HCT116 (cell line): ENCODE measurements at regions of chr5 and their contacts with region 1.

Region 1: GRCh38 chr5:55172051-55172899 is 702 bp downstream of the CDC20B start:
- DNase-seq: peak; percentile 85
- ATAC-seq: peak; percentile 42
- H3K4me3 ChIP-seq: peak overlapping the region; percentile 33 to 49
- H3K27ac ChIP-seq: no peak overlapping the region
- H3K4me1 ChIP-seq: peaks cover 14 to 37% of the 10 kb centered on the region in 2 experiments; a peak in 3 of 4 replicates
- H3K27me3 ChIP-seq: no peaks in the 10 kb centered on the region
- CTCF ChIP-seq: peak; percentile 68 to 87 (median 78)
- POLR2A ChIP-seq: no peak
- RAD21 ChIP-seq: peak; percentile 94

Region 2: DNA sequence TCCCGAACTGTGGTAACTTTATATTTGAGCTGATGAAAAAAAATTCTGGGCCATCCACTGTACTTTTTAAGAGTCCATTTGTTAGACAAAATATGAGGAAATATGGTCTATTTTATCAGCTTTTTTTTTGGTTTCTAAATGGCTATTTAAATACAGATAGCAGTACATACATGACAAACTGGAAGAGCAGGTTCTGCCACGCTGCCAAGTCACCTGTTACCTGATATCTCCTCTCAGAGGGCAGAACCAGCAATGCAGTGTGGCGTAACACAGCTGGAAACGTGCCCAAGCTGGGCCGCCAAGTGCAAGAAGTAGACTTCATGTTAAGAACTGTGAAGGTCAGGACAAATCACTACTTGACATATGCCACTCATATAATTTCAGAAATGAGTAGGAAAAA is 46.7 kb after region 1 on chr5:
- CTCF ChIA-PET with region 1: interaction called, 3 read pairs
- POLR2A ChIA-PET with region 1: no interaction called
- RAD21 ChIA-PET with region 1: interaction called in 1 of 2 experiments, 3 read pairs
- intact Hi-C with region 1: loop called (anchors 5 kb)
- DNase-seq: peak; percentile 84
- ATAC-seq: peak; percentile 86
- H3K4me3 ChIP-seq: no peak overlapping the region
- H3K27ac ChIP-seq: no peak overlapping the region; the same call in 1 of the 2 replicates
- H3K4me1 ChIP-seq: peaks cover 15 to 22% of the 10 kb centered on the region in 2 experiments
- H3K27me3 ChIP-seq: no peaks in the 10 kb centered on the region
- CTCF ChIP-seq: no peak
- POLR2A ChIP-seq: no peak
- RAD21 ChIP-seq: peak; percentile 30; the same call in 1 of the 2 replicates

Region 3: DNA sequence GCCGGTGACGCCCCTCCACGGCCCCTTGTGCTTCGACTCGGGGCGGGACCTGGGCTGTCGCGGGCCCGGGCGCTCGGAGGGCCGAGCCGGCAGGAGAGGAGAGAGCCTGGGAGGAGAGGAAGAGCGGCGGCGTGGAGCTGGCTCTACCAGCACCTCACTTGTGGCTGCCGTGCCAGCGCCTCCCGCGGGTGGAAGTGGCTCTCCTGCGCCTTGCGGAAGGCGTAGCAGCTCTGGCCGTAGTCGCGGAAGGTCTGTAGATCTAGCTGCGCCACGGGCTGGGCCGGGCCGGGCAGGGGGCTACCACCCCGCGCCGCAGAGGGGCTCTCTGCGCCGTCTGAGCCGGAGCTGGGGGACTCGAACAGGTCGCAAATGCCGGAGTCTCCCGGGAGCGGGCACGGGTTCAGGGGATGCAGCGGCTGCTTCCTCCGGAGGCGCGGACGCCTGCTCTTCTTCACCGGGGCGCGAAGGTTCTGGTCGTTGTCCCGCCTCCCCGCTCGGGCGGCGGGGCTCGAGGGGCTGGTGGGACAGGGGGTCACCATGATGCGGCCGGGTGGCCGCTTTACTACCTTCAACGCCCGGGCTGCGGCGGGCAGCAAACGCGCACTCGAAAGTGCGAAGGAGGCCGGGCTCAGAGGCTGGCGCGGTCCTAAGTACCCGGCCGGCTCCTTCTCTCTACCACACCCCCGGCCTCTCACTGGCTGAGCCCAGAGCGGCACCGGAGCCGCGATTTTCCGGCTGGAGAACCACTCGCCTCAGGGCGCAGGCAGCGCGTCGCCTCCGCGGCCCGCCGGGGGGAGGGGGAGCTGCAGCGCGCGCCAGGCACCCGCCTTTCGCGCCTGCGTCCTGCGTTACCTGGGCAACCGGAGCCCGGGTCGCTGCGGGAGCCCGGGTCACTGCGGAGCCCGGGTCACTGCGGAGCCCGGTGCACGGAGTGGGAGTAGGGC is 61.0 kb after region 1 on chr5 and contains the start of gene CCNO:
- CTCF ChIA-PET with region 1: interaction called, 14 read pairs
- POLR2A ChIA-PET with region 1: interaction called, 4 read pairs
- RAD21 ChIA-PET with region 1: no interaction called
- intact Hi-C with region 1: no loop called
- DNase-seq: peak; percentile 70
- ATAC-seq: peak; percentile 88
- H3K4me3 ChIP-seq: peak within 1 kb of the TSS; percentile 64 to 94
- H3K27ac ChIP-seq: peak within 1 kb of the TSS; percentile 88
- H3K4me1 ChIP-seq: peaks cover 10 to 24% of the 10 kb centered on the region in 2 experiments; a peak in 3 of 4 replicates
- H3K27me3 ChIP-seq: no peaks in the 10 kb centered on the region
- CTCF ChIP-seq: no peak; a peak in 1 of 6 replicates
- POLR2A ChIP-seq: peak; percentile 17
- RAD21 ChIP-seq: no peak
- total RNA-seq, gene CCNO: 12.1 TPM

Region 4: DNA sequence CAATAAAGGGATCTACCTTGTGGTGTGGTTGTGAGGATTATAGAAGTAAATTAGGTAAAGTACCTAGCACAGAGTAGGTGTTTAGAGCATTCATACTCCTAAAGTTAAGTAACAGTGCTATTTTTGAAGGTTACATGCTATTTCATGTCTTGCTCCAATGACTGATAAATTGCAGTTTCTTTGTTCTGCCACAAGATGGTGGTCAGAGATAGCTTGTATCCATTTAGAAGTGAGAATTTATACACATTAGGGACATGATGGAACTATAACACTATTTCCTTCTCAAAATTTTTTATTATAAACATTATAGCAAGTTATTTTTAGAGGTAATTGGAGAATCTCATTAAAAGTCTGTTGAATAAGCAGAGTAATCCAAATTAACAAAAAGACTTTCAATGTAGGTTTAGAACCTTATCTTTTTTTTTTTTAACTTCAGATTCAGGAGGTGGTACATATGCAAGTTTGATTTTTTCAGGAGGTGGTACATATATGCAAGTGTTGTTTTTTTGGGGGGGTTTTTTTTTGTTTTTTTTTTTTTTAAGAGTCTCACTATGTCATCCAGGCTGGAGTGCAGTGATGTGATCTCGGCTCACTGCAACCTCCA is 152.6 kb after region 1 on chr5:
- CTCF ChIA-PET with region 1: no interaction called
- POLR2A ChIA-PET with region 1: no interaction called
- RAD21 ChIA-PET with region 1: no interaction called
- intact Hi-C with region 1: loop called (anchors 5 kb)
- DNase-seq: peak; percentile 32
- ATAC-seq: peak; percentile 72
- H3K4me3 ChIP-seq: no peak overlapping the region
- H3K27ac ChIP-seq: no peak overlapping the region
- H3K4me1 ChIP-seq: no peaks in the 10 kb centered on the region
- H3K27me3 ChIP-seq: no peaks in the 10 kb centered on the region
- CTCF ChIP-seq: peak; percentile 42 to 70 (median 48); a peak in 5 of 6 replicates
- POLR2A ChIP-seq: no peak
- RAD21 ChIP-seq: peak; percentile 69

Region 5: DNA sequence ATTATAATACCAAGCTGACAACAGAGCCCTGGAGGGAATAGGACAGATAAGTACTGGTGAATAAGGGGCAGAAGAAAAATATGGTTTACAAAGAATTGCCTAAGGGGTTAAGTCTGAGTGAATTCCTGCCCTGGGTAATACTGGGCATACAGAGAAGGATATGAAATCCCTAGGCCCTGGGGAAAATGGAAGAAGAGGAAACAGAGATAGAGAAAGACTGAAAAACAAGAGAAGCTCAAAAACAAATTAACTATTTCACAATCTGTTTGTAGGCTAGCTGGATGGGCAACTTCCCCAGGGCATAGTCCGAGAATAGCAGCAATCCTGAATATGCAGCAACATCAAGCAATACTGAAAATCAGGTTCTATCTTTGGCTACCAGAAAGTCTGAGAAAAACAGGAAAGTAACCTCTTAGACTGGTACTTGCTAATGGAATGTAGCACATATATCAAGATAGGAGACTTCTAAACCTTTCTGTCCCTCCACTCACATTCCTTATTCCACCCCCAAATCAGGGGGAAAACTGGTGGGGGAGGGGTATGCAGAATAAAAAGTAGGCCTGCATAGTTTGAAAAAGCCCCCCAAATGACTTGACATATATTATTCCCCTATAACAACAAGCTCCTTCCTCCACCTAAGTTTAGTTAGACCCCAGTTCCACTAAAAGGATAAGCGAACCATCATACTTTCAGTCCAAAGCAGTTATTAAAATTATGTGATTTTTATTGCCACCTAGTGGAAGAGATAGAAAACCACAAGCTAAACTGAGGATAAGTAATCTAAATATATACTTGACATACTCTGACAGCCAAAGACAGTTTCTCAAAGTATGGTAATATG is 519.2 kb after region 1 on chr5:
- CTCF ChIA-PET with region 1: interaction called, 16 read pairs
- POLR2A ChIA-PET with region 1: no interaction called
- RAD21 ChIA-PET with region 1: no interaction called
- intact Hi-C with region 1: loop called (anchors 1 kb)
- DNase-seq: peak; percentile 33
- ATAC-seq: peak; percentile 63; the same call in 1 of the 2 replicates
- H3K4me3 ChIP-seq: no peak overlapping the region
- H3K27ac ChIP-seq: no peak overlapping the region
- H3K4me1 ChIP-seq: no peaks in the 10 kb centered on the region
- H3K27me3 ChIP-seq: no peaks in the 10 kb centered on the region
- CTCF ChIP-seq: peak; percentile 46 to 76 (median 68); a peak in 5 of 6 replicates
- POLR2A ChIP-seq: no peak
- RAD21 ChIP-seq: peak; percentile 82

Region 6: DNA sequence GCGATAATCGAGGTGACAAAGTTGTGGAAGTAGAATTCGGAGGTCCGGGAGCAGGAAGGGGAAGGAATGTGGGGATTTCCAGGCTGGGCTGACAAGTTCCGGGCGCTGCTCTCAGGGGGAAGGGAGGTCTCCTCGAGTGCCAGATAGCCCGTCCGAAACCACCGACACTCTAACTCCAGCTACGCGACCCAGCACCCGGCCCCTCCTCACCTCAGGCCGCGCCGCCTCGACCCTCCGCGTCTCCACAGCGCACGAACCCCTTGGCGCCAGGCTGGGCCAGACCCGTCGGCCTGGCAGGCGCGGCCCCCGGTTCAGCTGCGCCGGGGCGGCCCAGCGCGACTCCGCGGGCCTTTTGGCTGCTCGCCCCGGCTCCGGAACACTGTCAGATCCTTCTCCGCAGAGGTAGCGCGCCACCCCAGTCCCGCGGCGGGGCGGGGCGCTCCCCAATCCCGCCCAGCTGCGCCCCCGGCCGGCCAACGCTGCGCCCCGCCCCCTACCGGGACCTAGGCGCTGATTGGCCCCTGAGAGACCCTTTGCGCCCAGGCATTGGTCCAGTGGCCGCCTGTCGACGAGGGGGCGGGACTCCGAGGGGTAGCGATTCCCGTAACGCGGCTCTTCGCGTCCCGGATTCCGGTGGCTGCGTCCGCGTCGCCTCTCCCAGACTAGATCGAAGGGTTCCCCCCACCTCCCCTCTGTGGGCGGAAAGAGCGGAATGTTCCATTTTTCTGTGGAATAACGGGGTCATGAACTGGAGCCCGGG is 822.5 kb after region 1 on chr5 and contains the start of gene IL6ST:
- CTCF ChIA-PET with region 1: no interaction called
- POLR2A ChIA-PET with region 1: no interaction called
- RAD21 ChIA-PET with region 1: no interaction called
- intact Hi-C with region 1: loop called (anchors 10 kb)
- DNase-seq: peak; percentile 88
- ATAC-seq: peak; percentile 96
- H3K4me3 ChIP-seq: peak within 1 kb of the TSS; percentile 79 to 80
- H3K27ac ChIP-seq: peak within 1 kb of the TSS; percentile 89
- H3K4me1 ChIP-seq: peaks cover 5 to 31% of the 10 kb centered on the region in 2 experiments
- H3K27me3 ChIP-seq: no peaks in the 10 kb centered on the region
- CTCF ChIP-seq: no peak
- POLR2A ChIP-seq: peak; percentile 64
- RAD21 ChIP-seq: no peak
- total RNA-seq, gene IL6ST: 26.5 TPM